Esophagus muscularis mucosa (tissue), 4 donors: ENCODE measurements at regions of chr1 and their contacts with region 1.

Region 1: DNA sequence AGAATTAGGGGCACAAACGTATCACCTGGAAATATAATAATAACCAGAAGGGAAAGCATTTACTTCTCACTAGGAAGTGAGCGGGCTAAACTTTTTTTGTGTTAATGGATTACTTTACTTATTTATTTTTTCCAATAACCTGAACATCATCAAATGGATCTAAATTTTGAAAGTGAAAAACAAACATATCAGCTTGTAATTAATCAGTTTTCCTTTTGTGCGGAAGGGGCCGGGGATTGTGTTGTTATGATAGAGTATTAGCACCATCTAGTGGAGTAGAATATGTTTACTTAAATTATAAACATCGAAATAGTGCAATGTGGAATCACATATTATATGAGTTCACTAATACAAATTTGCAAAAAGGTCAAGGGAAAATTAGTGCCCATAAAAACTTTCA is 9.0 kb downstream of the CFH start:
- DNase-seq: no peak
- H3K4me3 ChIP-seq: peak overlapping the region; percentile 27 to 37 (median 35)
- H3K27ac ChIP-seq: no peak overlapping the region
- H3K4me1 ChIP-seq: peaks cover 0 to 7% (median 2%) of the 10 kb centered on the region in 4 donors
- H3K27me3 ChIP-seq: no peaks in the 10 kb centered on the region
- CTCF ChIP-seq: peak; percentile 54 to 67 (median 62)
- EP300 ChIP-seq: no peak
- POLR2A ChIP-seq: no peak

Region 2: DNA sequence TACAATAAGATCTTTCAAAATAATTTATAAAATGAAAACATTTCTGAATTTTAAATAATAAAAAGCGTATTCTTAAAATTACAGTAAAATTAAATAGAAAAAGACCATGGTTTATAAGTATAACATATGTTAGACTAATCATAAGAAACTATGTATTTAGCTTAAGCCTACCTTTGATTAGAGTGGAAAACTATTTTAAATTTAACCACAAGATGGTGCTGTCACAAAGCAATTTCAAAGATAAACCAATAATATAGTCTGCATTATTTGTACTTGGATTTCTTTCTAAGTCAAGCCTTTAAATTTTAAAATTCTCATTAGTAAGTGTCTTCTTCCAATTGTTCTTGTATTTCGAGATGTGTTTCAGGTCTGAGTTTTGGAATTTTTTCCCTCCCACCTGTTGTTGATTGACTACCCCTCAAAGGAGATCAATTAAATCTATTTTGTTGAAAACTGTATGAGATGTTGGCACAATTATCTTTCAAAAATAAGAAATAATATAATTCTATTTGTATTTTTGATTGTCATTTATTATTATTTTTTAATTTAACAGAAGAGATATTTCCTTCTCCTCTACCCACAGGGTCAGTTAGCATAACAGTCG is 512.4 kb before region 1 on chr1:
- intact Hi-C with region 1: loop called (anchors 5 kb)
- DNase-seq: no peak
- H3K4me3 ChIP-seq: no peak overlapping the region
- H3K27ac ChIP-seq: no peak overlapping the region
- H3K4me1 ChIP-seq: no peaks in the 10 kb centered on the region
- H3K27me3 ChIP-seq: no peaks in the 10 kb centered on the region
- CTCF ChIP-seq: peak; percentile 33 to 65 (median 62)
- EP300 ChIP-seq: no peak
- POLR2A ChIP-seq: no peak

Region 3: GRCh38 chr1:196317535-196318522 is 343.0 kb before region 1 on chr1:
- intact Hi-C with region 1: loop called (anchors 10 kb)
- DNase-seq: no peak
- H3K4me3 ChIP-seq: no peak overlapping the region
- H3K27ac ChIP-seq: no peak overlapping the region
- H3K4me1 ChIP-seq: no peaks in the 10 kb centered on the region
- H3K27me3 ChIP-seq: no peaks in the 10 kb centered on the region
- CTCF ChIP-seq: peak; percentile 50 to 69 (median 54)
- EP300 ChIP-seq: no peak
- POLR2A ChIP-seq: no peak

Region 4: DNA sequence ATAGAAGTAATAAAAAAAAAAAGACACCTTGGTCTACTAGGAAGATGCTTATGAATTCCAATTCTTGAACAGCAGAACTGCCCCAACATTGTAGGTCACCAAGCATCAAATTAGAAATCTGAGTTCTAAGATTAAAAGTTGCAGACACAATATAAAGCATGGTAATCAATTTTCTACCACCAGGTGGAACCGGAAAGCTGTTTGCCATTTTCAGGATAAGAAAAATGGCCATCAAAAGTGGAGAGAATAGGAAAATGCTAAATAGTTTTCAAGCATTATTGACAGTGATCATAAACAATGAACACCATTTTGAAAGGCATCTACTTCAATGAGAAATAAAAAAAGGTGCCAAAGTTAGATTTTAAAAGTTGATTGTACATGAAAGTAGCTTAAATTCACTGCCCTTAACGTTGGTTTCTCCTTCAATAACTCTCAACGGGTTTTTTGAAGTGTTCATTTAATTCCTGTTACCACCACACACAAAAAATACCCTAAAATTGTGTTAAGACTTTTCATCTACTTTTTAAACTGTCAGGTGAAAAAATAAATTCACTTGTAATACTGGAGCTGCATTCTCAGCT is 305.6 kb before region 1 on chr1:
- intact Hi-C with region 1: loop called (anchors 2 kb)
- DNase-seq: no peak
- H3K4me3 ChIP-seq: no peak overlapping the region
- H3K27ac ChIP-seq: no peak overlapping the region
- H3K4me1 ChIP-seq: peaks cover 0 to 19% (median 4%) of the 10 kb centered on the region in 4 donors
- H3K27me3 ChIP-seq: no peaks in the 10 kb centered on the region
- CTCF ChIP-seq: peak; percentile 50 to 60 (median 58)
- EP300 ChIP-seq: no peak
- POLR2A ChIP-seq: no peak